MCF 10A (cell line): ENCODE measurements at regions of chr19 and their contacts with region 1.

Region 1: DNA sequence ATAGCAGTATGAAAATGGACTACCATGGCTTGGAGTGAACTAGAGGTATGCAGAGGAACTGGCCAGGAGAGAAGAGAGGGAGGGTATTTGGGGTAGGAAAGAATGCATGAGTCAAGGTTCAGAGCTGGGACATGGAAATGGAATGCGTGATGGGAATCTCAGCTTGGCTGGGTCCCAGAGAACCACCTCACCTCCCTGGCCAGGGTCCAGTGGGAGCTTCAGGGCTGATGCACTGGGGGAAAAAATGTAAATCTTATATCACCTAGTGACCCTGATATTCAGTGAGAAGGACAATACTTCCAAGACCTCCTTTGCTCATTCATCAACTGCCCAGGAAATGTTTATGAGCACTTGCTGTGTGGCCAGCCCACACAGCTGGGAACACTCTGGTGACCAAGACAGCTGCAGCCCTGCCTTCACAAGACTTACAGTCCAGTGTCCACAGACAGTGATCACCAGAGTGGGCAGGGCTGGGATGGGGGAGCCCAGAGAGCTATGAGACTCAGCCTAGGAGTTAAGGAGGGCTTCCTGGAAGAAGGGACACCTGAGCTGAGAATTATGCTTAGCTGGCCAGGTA is 12.8 kb downstream of the IGSF23 start:
- DNase-seq: peak; percentile 97
- H3K4me3 Mint-ChIP-seq: peak overlapping the region; percentile 5
- H3K27ac Mint-ChIP-seq: peak overlapping the region; percentile 76
- H3K4me1 Mint-ChIP-seq: peaks cover 17% of the 10 kb centered on the region
- H3K27me3 Mint-ChIP-seq: no peaks in the 10 kb centered on the region
- CTCF ChIP-seq: no peak

Region 2: GRCh38 chr19:44615863-44616247 is 10.3 kb before region 1 on chr19:
- CTCF ChIA-PET with region 1: interaction called, 9 read pairs
- POLR2A ChIA-PET with region 1: interaction called, 10 read pairs
- intact Hi-C with region 1: no loop called
- DNase-seq: no peak
- H3K4me3 Mint-ChIP-seq: no peak overlapping the region
- H3K27ac Mint-ChIP-seq: no peak overlapping the region
- H3K4me1 Mint-ChIP-seq: no peaks in the 10 kb centered on the region
- H3K27me3 Mint-ChIP-seq: no peaks in the 10 kb centered on the region
- CTCF ChIP-seq: no peak

Region 3: DNA sequence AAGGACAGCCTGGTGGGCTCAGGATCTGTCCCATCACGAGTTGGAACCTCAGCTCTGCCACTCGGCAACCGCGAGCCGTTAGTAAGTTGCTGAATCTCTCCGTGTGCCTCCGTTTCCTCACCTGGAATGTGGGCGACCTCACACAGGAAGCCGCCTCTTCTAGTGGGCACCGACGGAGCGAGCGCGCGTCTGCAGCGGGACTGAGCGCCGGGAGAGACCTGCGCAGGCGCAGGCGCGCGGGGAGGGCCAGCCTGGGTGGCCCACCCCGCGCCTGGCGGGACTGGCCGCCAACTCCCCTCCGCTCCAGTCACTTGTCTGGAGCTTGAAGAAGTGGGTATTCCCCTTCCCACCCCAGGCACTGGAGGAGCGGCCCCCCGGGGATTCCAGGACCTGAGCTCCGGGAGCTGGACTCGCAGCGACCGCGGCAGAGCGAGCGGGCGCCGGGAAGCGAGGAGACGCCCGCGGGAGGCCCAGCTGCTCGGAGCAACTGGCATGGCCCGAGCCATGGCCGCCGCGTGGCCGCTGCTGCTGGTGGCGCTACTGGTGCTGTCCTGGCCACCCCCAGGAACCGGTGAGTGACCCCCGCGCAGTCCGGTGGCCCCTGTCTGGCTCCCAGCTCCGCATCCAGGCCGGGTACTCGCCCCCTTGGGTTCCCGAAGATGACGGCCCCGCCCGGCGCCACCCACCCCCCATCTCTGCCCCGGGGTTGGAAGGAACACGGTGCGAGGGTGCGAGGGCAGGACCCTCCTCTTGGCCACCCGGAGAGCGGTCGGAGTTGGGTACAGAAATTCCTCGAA is 17.7 kb after region 1 on chr19 and contains the start of gene PVR:
- CTCF ChIA-PET with region 1: interaction called, 3 read pairs
- POLR2A ChIA-PET with region 1: interaction called, 15 read pairs
- intact Hi-C with region 1: no loop called
- DNase-seq: peak; percentile 82
- H3K4me3 Mint-ChIP-seq: peak within 1 kb of the TSS; percentile 84
- H3K27ac Mint-ChIP-seq: peak within 1 kb of the TSS; percentile 63
- H3K4me1 Mint-ChIP-seq: peaks cover 30% of the 10 kb centered on the region
- H3K27me3 Mint-ChIP-seq: no peaks in the 10 kb centered on the region
- CTCF ChIP-seq: no peak
- total RNA-seq, gene PVR: 140 and 141 TPM in 2 replicates